ENCODE measurements at regions of chr2 and their contacts with region 1.

Region 1: GRCh38 chr2:133171393-133172004 is 396.8 kb downstream of the NCKAP5 start:
- DNase-seq: no peak

Region 2: DNA sequence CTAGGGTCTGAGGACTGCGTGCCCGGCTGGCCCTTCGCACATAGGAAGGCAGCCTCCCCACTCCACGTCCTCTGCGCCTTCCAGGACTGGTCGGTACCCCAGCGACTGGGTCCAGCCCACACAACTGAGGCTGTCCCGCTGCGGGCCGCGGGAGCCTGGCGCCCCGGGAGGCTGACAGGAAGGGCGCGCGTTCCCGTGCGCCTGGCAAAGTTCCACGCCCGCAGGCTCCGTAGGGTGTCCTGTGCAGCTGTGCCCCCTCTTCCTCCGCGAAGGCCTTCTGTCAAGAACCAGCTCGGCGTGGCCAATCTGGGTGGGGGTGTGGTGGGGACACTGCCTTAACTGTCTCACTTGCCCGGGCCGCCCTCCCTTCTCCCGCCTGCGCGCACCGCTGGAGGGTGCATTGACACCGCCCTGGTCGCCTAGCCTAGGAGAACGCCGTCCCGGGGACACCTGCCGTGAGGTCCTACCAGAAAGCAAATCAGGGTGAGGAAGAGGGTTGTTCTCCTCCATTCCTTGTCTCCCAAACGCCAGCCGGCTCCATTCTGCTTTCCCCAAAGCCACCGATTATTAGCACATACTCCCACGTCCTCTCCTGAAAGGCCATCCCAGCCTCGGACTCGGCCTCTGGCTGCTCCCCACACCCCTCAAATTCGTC is 500.9 kb before region 1 on chr2:
- intact Hi-C with region 1: loop called (anchors 10 kb)
- DNase-seq: no peak

Measured in cardiac septum (tissue), 1 donor.